ENCODE measurements at regions of chr6 and their contacts with region 1.

Region 1: DNA sequence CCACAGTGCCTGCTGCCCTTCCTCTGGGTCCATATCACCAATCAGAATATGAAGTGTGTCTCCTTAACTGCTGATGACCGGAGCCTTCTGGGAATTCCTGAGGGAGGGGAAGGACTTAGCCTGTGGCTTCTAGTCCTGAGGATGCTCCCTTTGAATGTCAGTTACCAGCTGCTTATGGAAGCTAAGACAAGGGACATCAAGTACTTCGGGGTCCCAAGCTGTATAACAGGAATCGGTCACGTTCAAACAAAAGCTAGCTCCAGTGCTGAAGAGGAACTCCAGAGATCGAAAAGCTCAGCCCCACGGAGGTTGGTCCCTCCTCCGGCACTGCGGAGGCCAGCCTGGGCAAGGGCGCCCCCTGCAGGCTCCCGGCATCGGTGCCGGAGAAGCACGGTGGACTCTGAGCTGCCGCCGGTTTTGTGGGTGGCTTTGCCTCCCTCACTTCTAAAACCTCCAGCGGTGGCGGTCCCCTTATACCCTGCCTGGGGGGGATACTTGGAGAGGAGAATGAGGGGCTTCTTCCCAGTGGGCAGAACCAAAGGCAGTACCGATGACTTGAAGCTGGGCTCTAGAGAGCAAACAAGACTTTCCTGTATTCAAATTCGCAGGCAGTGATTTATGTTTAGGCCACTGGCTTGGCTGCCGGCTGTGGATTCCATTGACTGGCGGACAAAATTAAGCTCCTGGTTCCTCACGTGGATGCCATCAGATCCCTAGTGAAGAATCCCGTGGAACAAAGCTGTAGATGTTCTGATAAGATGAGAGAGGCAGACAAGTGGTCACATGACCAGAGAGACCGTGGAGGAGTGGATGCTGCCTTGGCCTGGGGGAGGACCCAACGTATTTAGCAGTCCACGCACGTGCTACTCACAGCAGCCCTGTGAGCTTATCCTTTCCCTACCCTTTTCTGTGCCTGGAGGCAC is 16.2 kb upstream of the UBR2 start:
- DNase-seq: peak; percentile 45
- H3K4me3 ChIP-seq: peak overlapping the region; percentile 53
- H3K27ac ChIP-seq: no peak overlapping the region
- H3K27me3 ChIP-seq: no peaks in the 10 kb centered on the region
- CTCF ChIP-seq: peak; percentile 100

Region 2: GRCh38 chr6:41966961-41967311 is 580.7 kb before region 1 on chr6:
- CTCF ChIA-PET with region 1: no interaction called
- POLR2A ChIA-PET with region 1: no interaction called
- DNase-seq: peak; percentile 34
- H3K4me3 ChIP-seq: no peak overlapping the region
- H3K27ac ChIP-seq: no peak overlapping the region
- H3K27me3 ChIP-seq: no peaks in the 10 kb centered on the region
- CTCF ChIP-seq: no peak

Region 3: DNA sequence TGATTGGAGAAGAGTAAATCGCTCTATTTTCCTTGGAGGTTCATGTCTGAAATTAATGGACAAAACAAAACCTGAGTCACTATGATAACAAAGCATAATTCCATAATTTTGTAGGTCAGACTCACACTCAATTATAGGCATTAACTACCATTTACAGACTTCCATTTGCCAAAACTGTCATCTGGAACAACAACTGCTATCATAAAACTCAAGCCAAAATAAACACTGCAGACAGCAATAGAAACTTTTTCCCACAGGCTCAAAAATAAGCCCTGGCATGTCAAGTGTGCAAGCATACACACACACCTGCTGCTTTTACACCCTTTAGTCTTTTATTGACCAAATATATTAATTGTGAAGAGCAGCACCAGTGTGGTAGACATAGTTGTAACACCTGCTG is 337.1 kb before region 1 on chr6:
- CTCF ChIA-PET with region 1: interaction called, 99 read pairs
- POLR2A ChIA-PET with region 1: no interaction called
- DNase-seq: no peak
- H3K4me3 ChIP-seq: no peak overlapping the region
- H3K27ac ChIP-seq: no peak overlapping the region
- H3K27me3 ChIP-seq: no peaks in the 10 kb centered on the region
- CTCF ChIP-seq: no peak

Region 4: GRCh38 chr6:42260972-42261371 is 286.7 kb before region 1 on chr6:
- CTCF ChIA-PET with region 1: interaction called, 93 read pairs
- POLR2A ChIA-PET with region 1: no interaction called
- DNase-seq: no peak
- H3K4me3 ChIP-seq: no peak overlapping the region
- H3K27ac ChIP-seq: peak overlapping the region; percentile 31
- H3K27me3 ChIP-seq: no peaks in the 10 kb centered on the region
- CTCF ChIP-seq: peak; percentile 53

Region 5: DNA sequence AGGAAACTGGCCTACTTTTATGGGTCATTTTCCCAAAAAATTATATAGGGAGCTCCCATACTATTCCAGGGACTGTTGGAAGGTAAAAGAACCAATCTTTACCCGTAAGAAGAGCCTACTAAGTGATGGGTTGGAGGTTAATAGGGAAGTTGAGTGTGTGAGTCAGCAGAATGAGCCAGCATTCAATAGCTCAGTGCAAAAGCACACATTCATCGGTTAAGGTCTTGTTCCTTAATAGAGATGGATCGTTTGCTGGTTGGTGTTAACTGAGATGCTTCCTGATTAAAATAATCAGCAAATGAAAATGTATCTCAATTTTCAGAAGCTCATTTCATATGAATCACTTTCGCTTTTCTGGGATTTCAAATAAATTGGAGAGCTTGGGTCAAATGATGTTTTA is 214.8 kb before region 1 on chr6:
- CTCF ChIA-PET with region 1: interaction called, 10 read pairs
- POLR2A ChIA-PET with region 1: interaction called, 4 read pairs
- DNase-seq: no peak
- H3K4me3 ChIP-seq: no peak overlapping the region
- H3K27ac ChIP-seq: no peak overlapping the region
- H3K27me3 ChIP-seq: no peaks in the 10 kb centered on the region
- CTCF ChIP-seq: no peak

Region 6: DNA sequence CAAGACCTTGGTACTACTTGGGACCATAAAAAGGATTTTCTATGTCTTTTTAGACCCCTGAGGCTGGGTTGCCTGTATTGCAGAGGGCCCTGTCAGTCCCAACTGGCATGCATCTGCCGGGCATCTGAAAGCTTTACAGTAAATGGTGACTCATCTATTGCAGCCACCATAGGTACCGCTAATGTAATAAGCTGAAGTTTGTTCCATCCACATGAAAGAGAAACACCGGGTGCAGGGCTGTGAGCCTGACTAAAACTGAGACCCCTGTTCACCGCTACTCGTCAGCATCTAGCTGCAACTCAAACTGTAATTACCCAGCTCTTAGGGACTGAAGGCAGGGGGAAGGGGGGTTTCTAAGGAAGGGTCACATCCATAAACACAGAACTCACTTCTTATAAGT is 145.5 kb before region 1 on chr6:
- CTCF ChIA-PET with region 1: interaction called, 28 read pairs
- POLR2A ChIA-PET with region 1: no interaction called
- DNase-seq: no peak
- H3K4me3 ChIP-seq: no peak overlapping the region
- H3K27ac ChIP-seq: no peak overlapping the region
- H3K27me3 ChIP-seq: no peaks in the 10 kb centered on the region
- CTCF ChIP-seq: no peak

Region 7: DNA sequence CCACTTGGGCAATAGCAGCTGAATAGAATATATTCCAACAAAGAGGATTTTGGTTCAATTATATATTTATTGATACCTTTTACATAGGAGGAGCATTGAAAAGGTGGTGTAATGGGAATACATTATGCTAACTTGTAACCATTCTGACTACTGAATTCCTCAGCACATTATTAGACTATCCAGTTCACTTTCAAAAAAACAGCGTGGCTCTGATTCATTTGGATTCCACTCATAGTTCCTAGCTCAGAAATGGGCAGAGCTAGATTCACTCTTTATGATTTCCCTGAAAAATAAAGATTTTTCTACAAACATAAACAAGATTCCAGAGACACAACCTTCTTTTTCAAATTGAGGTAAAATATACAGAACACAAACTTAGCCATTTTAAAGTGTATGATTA is 86.8 kb before region 1 on chr6:
- CTCF ChIA-PET with region 1: interaction called, 20 read pairs
- POLR2A ChIA-PET with region 1: no interaction called
- DNase-seq: no peak
- H3K4me3 ChIP-seq: no peak overlapping the region
- H3K27ac ChIP-seq: no peak overlapping the region
- H3K27me3 ChIP-seq: no peaks in the 10 kb centered on the region
- CTCF ChIP-seq: no peak

Region 8: DNA sequence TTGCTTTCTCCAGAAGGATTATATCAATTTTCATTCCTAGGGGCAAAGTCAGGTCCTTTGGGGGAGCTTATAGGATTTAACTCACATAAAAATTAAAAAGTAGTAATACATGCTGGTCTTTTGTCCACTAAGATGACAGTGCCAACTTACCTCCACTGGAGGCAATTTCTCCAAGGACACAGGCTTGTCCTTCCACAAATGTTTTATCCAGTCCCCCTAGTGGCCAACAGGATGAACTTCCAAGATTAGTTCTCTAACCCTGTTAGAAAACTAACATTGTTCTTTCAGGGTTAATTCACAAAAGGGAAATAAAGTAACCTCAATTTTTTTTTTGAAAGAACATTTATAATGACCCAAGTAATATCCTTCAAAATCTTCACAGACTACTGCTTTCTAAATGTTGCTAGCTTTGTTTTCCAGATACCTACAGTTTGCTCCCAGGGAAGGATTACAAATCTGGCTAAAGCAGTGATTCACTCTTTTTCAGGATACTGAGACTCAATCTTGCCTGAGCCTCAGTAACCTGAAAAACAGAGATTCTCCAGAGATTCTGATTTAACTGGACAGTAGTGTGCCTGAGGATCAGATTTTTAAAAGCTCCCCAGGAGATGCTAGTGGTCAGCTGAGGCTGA is 15.5 kb before region 1 on chr6:
- CTCF ChIA-PET with region 1: interaction called, 97 read pairs
- POLR2A ChIA-PET with region 1: no interaction called
- DNase-seq: no peak
- H3K4me3 ChIP-seq: no peak overlapping the region
- H3K27ac ChIP-seq: no peak overlapping the region
- H3K27me3 ChIP-seq: no peaks in the 10 kb centered on the region
- CTCF ChIP-seq: peak; percentile 84

Region 9: DNA sequence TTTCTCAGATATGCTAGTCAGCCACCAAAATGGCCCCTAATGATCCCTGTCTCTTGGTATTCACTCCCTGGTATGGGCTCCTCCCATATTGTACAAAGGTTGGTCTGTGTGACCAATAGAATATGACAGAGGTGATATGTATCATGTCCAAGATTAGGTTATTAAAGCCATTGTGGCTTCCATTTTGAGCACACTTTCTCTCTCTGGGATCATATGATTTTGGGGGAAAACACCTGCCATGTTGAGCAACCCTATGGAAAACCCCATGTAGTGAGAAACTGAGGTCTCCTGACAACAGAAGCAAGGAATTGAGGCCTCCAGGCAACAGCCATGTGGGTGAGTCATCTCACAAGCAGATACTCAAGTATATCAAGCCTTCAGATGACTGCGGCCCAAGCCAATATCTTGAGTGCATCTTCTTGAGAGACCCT is 828.9 kb after region 1 on chr6:
- CTCF ChIA-PET with region 1: no interaction called
- POLR2A ChIA-PET with region 1: no interaction called
- DNase-seq: no peak
- H3K4me3 ChIP-seq: no peak overlapping the region
- H3K27ac ChIP-seq: no peak overlapping the region
- H3K27me3 ChIP-seq: peaks cover 7% of the 10 kb centered on the region
- CTCF ChIP-seq: no peak